WTC11 (cell line): ENCODE measurements at regions of chr12 and their contacts with region 1.

Region 1: GRCh38 chr12:45246236-45246635 is 30.3 kb downstream of the ANO6 start:
- DNase-seq: no peak
- ATAC-seq: no peak
- H3K4me3 Mint-ChIP-seq: no peak overlapping the region
- H3K27ac Mint-ChIP-seq: no peak overlapping the region; the same call in 1 of the 2 replicates
- H3K4me1 Mint-ChIP-seq: peaks cover 49% of the 10 kb centered on the region
- H3K27me3 Mint-ChIP-seq: no peaks in the 10 kb centered on the region
- CTCF ChIP-seq: no peak

Region 2: GRCh38 chr12:45315462-45315861 is 69.2 kb after region 1 on chr12:
- CTCF ChIA-PET with region 1: no interaction called
- POLR2A ChIA-PET with region 1: no interaction called
- DNase-seq: no peak
- ATAC-seq: no peak
- H3K4me3 Mint-ChIP-seq: no peak overlapping the region
- H3K27ac Mint-ChIP-seq: no peak overlapping the region
- H3K4me1 Mint-ChIP-seq: peaks cover 4% of the 10 kb centered on the region; the same call in 1 of the 2 replicates
- H3K27me3 Mint-ChIP-seq: no peaks in the 10 kb centered on the region
- CTCF ChIP-seq: no peak

Region 3: DNA sequence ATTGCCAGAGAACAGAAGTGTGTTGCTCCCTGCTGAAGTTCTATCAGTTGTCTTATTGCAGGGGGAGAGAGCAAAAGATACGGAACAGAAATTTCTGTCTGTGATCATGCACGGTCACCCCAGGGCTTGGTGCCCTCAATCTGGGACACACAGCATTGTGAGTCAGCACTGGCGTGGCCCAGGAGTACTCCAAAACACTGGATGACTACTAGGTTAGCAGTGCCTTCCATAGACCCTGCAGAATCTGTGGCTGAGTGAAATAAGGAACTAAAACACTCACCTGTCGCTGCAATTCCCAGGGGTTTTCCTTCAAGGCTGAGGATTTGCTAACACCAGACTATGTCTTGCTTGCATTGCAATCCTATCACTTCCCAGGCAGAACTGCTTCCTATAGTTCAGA is 135.1 kb after region 1 on chr12:
- CTCF ChIA-PET with region 1: no interaction called
- POLR2A ChIA-PET with region 1: no interaction called
- DNase-seq: no peak
- ATAC-seq: no peak
- H3K4me3 Mint-ChIP-seq: no peak overlapping the region
- H3K27ac Mint-ChIP-seq: no peak overlapping the region
- H3K4me1 Mint-ChIP-seq: no peaks in the 10 kb centered on the region
- H3K27me3 Mint-ChIP-seq: no peaks in the 10 kb centered on the region
- CTCF ChIP-seq: no peak

Region 4: GRCh38 chr12:45720069-45720468 is 473.8 kb after region 1 on chr12:
- CTCF ChIA-PET with region 1: no interaction called
- POLR2A ChIA-PET with region 1: interaction called, 11 read pairs
- DNase-seq: no peak
- ATAC-seq: no peak
- H3K4me3 Mint-ChIP-seq: no peak overlapping the region
- H3K27ac Mint-ChIP-seq: no peak overlapping the region
- H3K4me1 Mint-ChIP-seq: peaks cover 8% of the 10 kb centered on the region
- H3K27me3 Mint-ChIP-seq: no peaks in the 10 kb centered on the region
- CTCF ChIP-seq: no peak